WTC11 (cell line): ENCODE measurements at regions of chr5 and their contacts with region 1.

Region 1: GRCh38 chr5:103393101-103393754 is 134.7 kb downstream of the MACIR start:
- DNase-seq: no peak
- ATAC-seq: peak; percentile 87
- H3K4me3 Mint-ChIP-seq: no peak overlapping the region
- H3K27ac Mint-ChIP-seq: 0 out of 2 replicates have a peak overlapping the region, but pooled peaks have one; percentile 15
- H3K4me1 Mint-ChIP-seq: peaks cover 49% of the 10 kb centered on the region
- H3K27me3 Mint-ChIP-seq: no peaks in the 10 kb centered on the region
- CTCF ChIP-seq: no peak

Region 2: GRCh38 chr5:103407184-103407798 is 14.1 kb after region 1 on chr5:
- CTCF ChIA-PET with region 1: interaction called, 10 read pairs
- POLR2A ChIA-PET with region 1: interaction called, 4 read pairs
- DNase-seq: no peak
- ATAC-seq: peak; percentile 74
- H3K4me3 Mint-ChIP-seq: no peak overlapping the region
- H3K27ac Mint-ChIP-seq: no peak overlapping the region
- H3K4me1 Mint-ChIP-seq: no peaks in the 10 kb centered on the region
- H3K27me3 Mint-ChIP-seq: no peaks in the 10 kb centered on the region
- CTCF ChIP-seq: no peak

Region 3: GRCh38 chr5:103475629-103476240 is 82.5 kb after region 1 on chr5:
- CTCF ChIA-PET with region 1: interaction called, 11 read pairs
- POLR2A ChIA-PET with region 1: no interaction called
- DNase-seq: no peak
- ATAC-seq: peak; percentile 81
- H3K4me3 Mint-ChIP-seq: no peak overlapping the region
- H3K27ac Mint-ChIP-seq: no peak overlapping the region; the same call in 1 of the 2 replicates
- H3K4me1 Mint-ChIP-seq: peaks cover 24% of the 10 kb centered on the region
- H3K27me3 Mint-ChIP-seq: no peaks in the 10 kb centered on the region
- CTCF ChIP-seq: 0 out of 2 replicates have a peak, but pooled peaks have one; percentile 14

Region 4: GRCh38 chr5:103519550-103519949 is 126.3 kb after region 1 on chr5:
- CTCF ChIA-PET with region 1: interaction called, 12 read pairs
- POLR2A ChIA-PET with region 1: interaction called, 8 read pairs
- DNase-seq: peak; percentile 27
- ATAC-seq: peak; percentile 83
- H3K4me3 Mint-ChIP-seq: no peak overlapping the region
- H3K27ac Mint-ChIP-seq: no peak overlapping the region
- H3K4me1 Mint-ChIP-seq: peaks cover 10% of the 10 kb centered on the region
- H3K27me3 Mint-ChIP-seq: no peaks in the 10 kb centered on the region
- CTCF ChIP-seq: peak; percentile 14; the same call in 1 of the 2 replicates